Mammary epithelial cell (primary cell): ENCODE measurements at regions of chr12 and their contacts with region 1.

Region 1: GRCh38 chr12:122051231-122051876 is 27.2 kb upstream of the MLXIP start:
- DNase-seq: no peak
- H3K4me3 ChIP-seq: no peak overlapping the region
- H3K27ac ChIP-seq: no peak overlapping the region
- H3K4me1 ChIP-seq: no peaks in the 10 kb centered on the region
- H3K27me3 ChIP-seq: no peaks in the 10 kb centered on the region
- CTCF ChIP-seq: no peak

Region 2: GRCh38 chr12:121917979-121918678 is 133.2 kb before region 1 on chr12 and contains the start of gene CFAP251:
- CTCF ChIA-PET with region 1: no interaction called
- dilution Hi-C with region 1: no loop called
- in situ Hi-C with region 1: no loop called
- intact Hi-C with region 1: loop called (anchors 2 kb)
- DNase-seq: no peak
- H3K4me3 ChIP-seq: no peak within 1 kb of the TSS
- H3K27ac ChIP-seq: no peak within 1 kb of the TSS
- H3K4me1 ChIP-seq: peaks cover 13% of the 10 kb centered on the region
- H3K27me3 ChIP-seq: no peaks in the 10 kb centered on the region
- CTCF ChIP-seq: no peak
- total RNA-seq, gene CFAP251: 18.7 to 25.3 TPM

Region 3: GRCh38 chr12:122097927-122098756 is 46.8 kb after region 1 on chr12:
- CTCF ChIA-PET with region 1: no interaction called
- dilution Hi-C with region 1: no loop called
- in situ Hi-C with region 1: no loop called
- intact Hi-C with region 1: loop called (anchors 1 kb)
- DNase-seq: peak; percentile 64
- H3K4me3 ChIP-seq: no peak overlapping the region
- H3K27ac ChIP-seq: peak overlapping the region; percentile 85
- H3K4me1 ChIP-seq: peaks cover 53% of the 10 kb centered on the region
- H3K27me3 ChIP-seq: no peaks in the 10 kb centered on the region
- CTCF ChIP-seq: no peak

Region 4: DNA sequence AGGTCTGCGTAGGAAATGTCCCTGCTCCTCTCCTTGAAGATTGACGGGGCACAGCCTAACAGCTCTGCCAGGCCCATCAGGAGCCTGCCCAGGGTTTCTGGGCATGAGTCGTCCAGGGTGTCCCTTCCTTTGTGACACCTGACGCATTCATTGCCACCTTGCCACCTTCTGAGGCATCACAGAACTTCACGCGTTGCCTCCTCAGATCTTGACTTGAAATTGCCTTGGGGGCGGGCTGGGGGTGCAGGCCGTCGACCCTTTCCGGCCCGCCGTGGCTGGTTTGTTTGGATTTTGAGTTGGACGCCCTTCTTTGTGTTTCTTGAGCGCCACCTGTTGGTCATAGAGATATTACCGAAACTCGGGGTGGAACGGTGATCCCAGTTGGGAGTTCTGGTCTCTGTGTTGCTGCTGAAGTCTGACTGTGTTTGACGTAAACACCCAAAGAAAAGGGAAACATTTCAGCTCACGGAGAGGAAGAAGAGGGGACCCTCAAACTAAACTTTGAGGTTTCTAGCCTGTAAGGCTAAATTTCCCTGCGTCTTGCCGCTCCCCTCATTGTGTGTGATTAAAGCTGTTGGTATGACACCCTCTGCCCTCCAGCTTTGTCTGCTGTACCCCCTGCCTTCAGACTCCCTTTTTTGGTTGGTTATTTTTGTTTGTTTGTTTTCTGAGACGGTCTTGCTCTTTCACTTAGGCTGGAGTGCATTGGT is 71.9 kb after region 1 on chr12:
- CTCF ChIA-PET with region 1: no interaction called
- dilution Hi-C with region 1: no loop called
- in situ Hi-C with region 1: loop called (anchors 5 to 10 kb)
- intact Hi-C with region 1: loop called (anchors 1 kb)
- DNase-seq: peak; percentile 65
- H3K4me3 ChIP-seq: no peak overlapping the region
- H3K27ac ChIP-seq: no peak overlapping the region
- H3K4me1 ChIP-seq: peaks cover 9% of the 10 kb centered on the region
- H3K27me3 ChIP-seq: no peaks in the 10 kb centered on the region
- CTCF ChIP-seq: peak; percentile 52 to 71

Region 5: DNA sequence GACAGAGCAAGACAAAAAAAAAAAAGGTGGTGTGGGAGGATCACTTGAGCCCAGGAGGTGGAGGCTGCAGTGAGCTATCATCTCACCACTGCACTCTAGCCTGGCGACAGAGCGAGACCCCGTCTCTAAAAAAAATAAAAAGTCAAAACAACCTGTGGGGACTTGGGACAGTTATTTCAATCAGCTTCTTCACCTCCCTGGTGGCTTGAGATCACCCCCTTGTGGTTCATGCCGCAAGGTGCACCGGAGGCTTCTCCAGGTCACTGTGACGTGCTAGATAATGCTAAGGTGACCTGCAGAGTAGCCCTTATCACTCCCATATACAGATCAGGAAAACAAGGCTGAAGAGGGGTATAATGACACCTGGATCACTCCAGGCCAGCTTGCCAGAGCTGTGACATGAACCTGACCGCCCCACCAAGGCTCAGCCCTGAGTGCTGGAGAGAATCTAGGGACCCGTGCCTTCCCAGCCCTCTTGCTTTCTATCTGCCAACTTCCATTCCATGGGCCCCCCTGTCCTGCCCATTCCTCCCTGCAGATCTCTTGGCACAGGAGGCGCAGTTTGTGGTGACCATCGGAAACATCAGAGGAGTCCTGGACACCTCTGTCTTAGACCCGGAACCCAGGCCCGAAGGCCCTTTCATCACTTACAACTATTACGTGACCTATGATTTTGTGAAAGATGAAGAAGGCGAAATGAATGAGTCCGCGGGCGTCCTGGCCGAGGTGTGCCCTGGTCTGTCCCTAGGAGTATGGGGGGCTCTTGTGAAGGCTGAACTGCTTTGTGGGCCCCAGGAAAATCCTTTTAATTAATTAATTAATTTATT is 139.7 kb after region 1 on chr12:
- CTCF ChIA-PET with region 1: no interaction called
- dilution Hi-C with region 1: no loop called
- in situ Hi-C with region 1: loop called in 1 of 2 experiments (anchors 10 kb)
- intact Hi-C with region 1: loop called (anchors 2 kb)
- DNase-seq: peak; percentile 43
- H3K4me3 ChIP-seq: no peak overlapping the region
- H3K27ac ChIP-seq: no peak overlapping the region
- H3K4me1 ChIP-seq: no peaks in the 10 kb centered on the region
- H3K27me3 ChIP-seq: no peaks in the 10 kb centered on the region
- CTCF ChIP-seq: peak; percentile 88 to 92

Region 6: GRCh38 chr12:122356192-122356635 is 304.9 kb after region 1 on chr12:
- CTCF ChIA-PET with region 1: no interaction called
- dilution Hi-C with region 1: no loop called
- in situ Hi-C with region 1: no loop called
- intact Hi-C with region 1: loop called (anchors 5 kb)
- DNase-seq: peak; percentile 72
- H3K4me3 ChIP-seq: no peak overlapping the region
- H3K27ac ChIP-seq: no peak overlapping the region
- H3K4me1 ChIP-seq: no peaks in the 10 kb centered on the region
- H3K27me3 ChIP-seq: no peaks in the 10 kb centered on the region
- CTCF ChIP-seq: peak; percentile 69 to 90